ENCODE measurements at regions of chr11 and their contacts with region 1.

Region 1: GRCh38 chr11:313787-314547 is at the start of gene IFITM1:
- DNase-seq: peak; percentile 84
- H3K4me3 Mint-ChIP-seq: peak within 1 kb of the TSS; percentile 88
- H3K27ac Mint-ChIP-seq: peak within 1 kb of the TSS; percentile 96
- H3K4me1 Mint-ChIP-seq: peaks cover 33% of the 10 kb centered on the region
- H3K27me3 Mint-ChIP-seq: no peaks in the 10 kb centered on the region
- total RNA-seq, gene IFITM1: 1,010 to 1,055 TPM

Region 2: DNA sequence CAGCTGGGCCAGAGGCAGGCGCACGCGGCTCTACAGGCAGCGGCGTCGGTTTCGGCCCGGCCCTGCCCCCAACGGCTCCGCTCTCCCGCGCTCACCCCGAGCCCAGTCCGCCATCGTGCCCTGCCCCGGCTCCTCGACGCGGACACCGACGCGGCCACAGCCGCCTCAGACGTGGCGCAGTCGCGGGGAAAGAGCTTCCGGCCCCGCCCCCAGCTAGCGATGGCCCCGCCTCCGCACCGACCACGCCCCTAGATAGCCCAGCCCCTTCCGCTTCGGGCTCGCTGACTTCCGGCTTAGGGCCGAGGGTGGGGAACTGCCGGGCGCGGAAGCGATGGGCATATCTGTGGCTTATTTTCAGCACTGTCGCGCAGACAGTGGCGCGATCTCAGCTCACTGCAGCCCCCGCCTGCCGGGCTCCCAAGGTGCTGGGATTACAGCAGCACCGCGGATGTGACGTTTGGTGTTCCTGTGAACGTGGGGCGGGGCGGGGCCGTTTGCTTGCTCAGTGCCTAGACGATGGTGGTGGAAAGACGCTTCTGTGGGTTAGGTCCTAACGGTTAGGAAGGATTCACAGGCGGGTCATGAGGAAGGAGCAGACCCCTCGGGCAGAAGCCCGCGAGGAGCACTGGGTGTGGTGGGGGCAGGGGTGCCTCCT is 106.6 kb before region 1 on chr11 and contains the starts of genes BET1L and RIC8A:
- CTCF ChIA-PET with region 1: interaction called, 5 read pairs
- POLR2A ChIA-PET with region 1: interaction called, 27 read pairs
- DNase-seq: peak; percentile 98
- H3K4me3 Mint-ChIP-seq: peak within 1 kb of the TSS; percentile 96
- H3K27ac Mint-ChIP-seq: peak within 1 kb of the TSS; percentile 100
- H3K4me1 Mint-ChIP-seq: peaks cover 55% of the 10 kb centered on the region
- H3K27me3 Mint-ChIP-seq: no peaks in the 10 kb centered on the region
- total RNA-seq, gene BET1L: 39.3 to 44.5 TPM
- total RNA-seq, gene RIC8A: 98.7 to 103 TPM

Region 3: GRCh38 chr11:236774-237767 is 76.9 kb before region 1 on chr11 and contains the start of gene PSMD13:
- CTCF ChIA-PET with region 1: interaction called, 6 read pairs
- POLR2A ChIA-PET with region 1: interaction called, 16 read pairs
- DNase-seq: peak; percentile 90
- H3K4me3 Mint-ChIP-seq: peak within 1 kb of the TSS; percentile 92
- H3K27ac Mint-ChIP-seq: peak within 1 kb of the TSS; percentile 98
- H3K4me1 Mint-ChIP-seq: peaks cover 49% of the 10 kb centered on the region
- H3K27me3 Mint-ChIP-seq: no peaks in the 10 kb centered on the region
- total RNA-seq, gene PSMD13: 156 to 160 TPM

Region 4: DNA sequence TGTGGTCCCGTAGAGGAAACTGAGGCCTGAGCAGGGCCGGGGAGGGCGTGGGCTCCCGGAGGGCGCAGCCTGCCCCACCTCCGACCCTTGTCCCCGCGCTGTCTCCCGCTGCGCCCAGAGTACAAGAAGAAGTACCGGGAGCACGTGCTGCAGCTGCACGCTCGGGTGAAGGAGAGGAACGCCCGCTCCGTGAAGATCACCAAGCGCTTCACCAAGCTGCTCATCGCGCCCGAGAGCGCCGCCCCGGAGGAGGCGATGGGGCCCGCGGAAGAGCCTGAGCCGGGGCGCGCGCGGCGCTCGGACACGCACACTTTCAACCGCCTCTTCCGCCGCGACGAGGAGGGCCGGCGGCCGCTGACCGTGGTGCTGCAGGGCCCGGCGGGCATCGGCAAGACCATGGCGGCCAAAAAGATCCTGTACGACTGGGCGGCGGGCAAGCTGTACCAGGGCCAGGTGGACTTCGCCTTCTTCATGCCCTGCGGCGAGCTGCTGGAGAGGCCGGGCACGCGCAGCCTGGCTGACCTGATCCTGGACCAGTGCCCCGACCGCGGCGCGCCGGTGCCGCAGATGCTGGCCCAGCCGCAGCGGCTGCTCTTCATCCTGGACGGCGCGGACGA is 33.9 kb before region 1 on chr11:
- CTCF ChIA-PET with region 1: interaction called, 4 read pairs
- POLR2A ChIA-PET with region 1: interaction called, 22 read pairs
- DNase-seq: peak; percentile 54
- H3K4me3 Mint-ChIP-seq: peak overlapping the region; percentile 69
- H3K27ac Mint-ChIP-seq: peak overlapping the region; percentile 66
- H3K4me1 Mint-ChIP-seq: peaks cover 47% of the 10 kb centered on the region
- H3K27me3 Mint-ChIP-seq: peaks cover 68% of the 10 kb centered on the region

Region 5: GRCh38 chr11:326842-327580 is 13.0 kb after region 1 on chr11:
- CTCF ChIA-PET with region 1: interaction called, 5 read pairs
- POLR2A ChIA-PET with region 1: interaction called, 20 read pairs
- DNase-seq: peak; percentile 70
- H3K4me3 Mint-ChIP-seq: peak overlapping the region; percentile 32
- H3K27ac Mint-ChIP-seq: peak overlapping the region; percentile 75
- H3K4me1 Mint-ChIP-seq: peaks cover 64% of the 10 kb centered on the region
- H3K27me3 Mint-ChIP-seq: no peaks in the 10 kb centered on the region

Region 6: GRCh38 chr11:355581-356458 is 41.9 kb after region 1 on chr11:
- CTCF ChIA-PET with region 1: interaction called, 16 read pairs
- POLR2A ChIA-PET with region 1: interaction called, 85 read pairs
- DNase-seq: peak; percentile 89
- H3K4me3 Mint-ChIP-seq: peak overlapping the region; percentile 88
- H3K27ac Mint-ChIP-seq: peak overlapping the region; percentile 95
- H3K4me1 Mint-ChIP-seq: peaks cover 41% of the 10 kb centered on the region
- H3K27me3 Mint-ChIP-seq: peaks cover 12% of the 10 kb centered on the region

Region 7: GRCh38 chr11:447923-448731 is 134.2 kb after region 1 on chr11:
- CTCF ChIA-PET with region 1: interaction called, 9 read pairs
- POLR2A ChIA-PET with region 1: interaction called, 11 read pairs
- DNase-seq: peak; percentile 96
- H3K4me3 Mint-ChIP-seq: peak overlapping the region; percentile 90
- H3K27ac Mint-ChIP-seq: peak overlapping the region; percentile 97
- H3K4me1 Mint-ChIP-seq: peaks cover 32% of the 10 kb centered on the region
- H3K27me3 Mint-ChIP-seq: peaks cover 9% of the 10 kb centered on the region

Region 8: DNA sequence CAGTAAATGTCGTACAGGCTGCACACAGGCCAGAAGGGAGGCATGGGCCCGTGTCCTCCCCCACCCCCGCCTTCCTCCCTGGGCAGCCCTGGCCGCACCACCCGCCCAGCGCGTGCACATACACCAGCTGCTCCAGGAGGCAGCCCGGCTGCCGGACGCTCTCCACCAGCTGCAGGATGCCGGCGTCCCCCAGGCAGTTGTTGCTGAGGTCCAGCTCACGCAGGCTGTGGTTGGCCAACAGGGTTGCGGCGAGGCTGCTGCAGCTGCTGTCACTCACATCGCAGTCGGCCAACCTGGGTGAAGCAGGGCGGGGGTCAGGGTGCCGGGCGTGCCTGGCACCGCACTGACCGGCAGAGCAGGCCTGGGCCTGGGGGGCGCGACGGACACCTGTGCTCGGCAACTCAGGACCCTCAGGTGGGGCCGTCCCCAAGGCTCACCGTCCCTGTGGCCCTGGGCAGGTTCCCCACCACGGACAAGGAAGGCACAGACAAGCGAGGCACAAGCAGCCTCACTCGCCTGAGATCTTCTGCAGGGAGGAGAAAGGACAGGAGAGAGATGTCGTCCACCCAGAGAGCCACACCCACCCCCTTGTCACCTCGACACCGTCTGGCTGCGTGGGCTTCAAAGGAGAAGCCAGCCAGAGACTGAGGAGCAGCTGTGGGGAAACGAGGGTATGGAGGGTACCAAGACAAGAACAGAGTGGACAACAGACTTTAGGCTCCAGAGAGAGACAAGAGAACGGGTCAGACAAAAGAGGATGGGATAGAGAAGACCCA is 181.0 kb after region 1 on chr11:
- CTCF ChIA-PET with region 1: no interaction called
- POLR2A ChIA-PET with region 1: no interaction called
- DNase-seq: no peak
- H3K4me3 Mint-ChIP-seq: no peak overlapping the region
- H3K27ac Mint-ChIP-seq: no peak overlapping the region
- H3K4me1 Mint-ChIP-seq: peaks cover 13% of the 10 kb centered on the region
- H3K27me3 Mint-ChIP-seq: no peaks in the 10 kb centered on the region

Measured in activated CD4-positive, alpha-beta memory T cell treated with anti-CD3 and anti-CD28 coated beads, Interleukin-2, amount 10 ng/mL, durations not matched to agents 7 days and 5 days (primary cell).